HEK293T (cell line): ENCODE measurements at regions of chr4 and their contacts with region 1.

Region 1: GRCh38 chr4:119212234-119212963 is at the start of gene USP53:
- DNase-seq: peak; percentile 98

Region 2: DNA sequence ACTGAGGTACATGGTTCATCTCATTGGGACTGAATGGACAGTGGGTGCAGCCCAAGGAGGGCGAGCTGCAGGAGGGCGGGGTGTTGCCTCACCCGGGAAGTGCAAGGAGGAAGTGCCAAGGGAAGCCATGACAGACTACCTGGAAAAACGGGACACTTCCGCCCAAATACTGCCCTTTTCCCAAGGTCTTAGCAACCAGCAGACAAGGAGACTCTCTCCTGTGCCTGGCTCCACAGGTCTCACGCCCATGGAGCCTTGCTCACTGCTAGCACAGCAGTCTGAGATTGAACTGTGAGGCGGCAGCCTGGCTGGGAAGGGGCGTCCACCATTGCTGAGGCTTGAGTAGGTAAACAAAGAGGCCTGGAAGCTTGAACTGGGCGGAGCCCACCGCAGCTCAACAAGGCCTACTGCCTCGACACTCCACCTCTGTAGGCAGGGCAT is 14.6 kb before region 1 on chr4:
- CTCF ChIA-PET with region 1: no interaction called
- POLR2A ChIA-PET with region 1: no interaction called
- DNase-seq: no peak

Region 3: GRCh38 chr4:119227690-119228089 is 15.3 kb after region 1 on chr4:
- CTCF ChIA-PET with region 1: no interaction called
- POLR2A ChIA-PET with region 1: interaction called, 14 read pairs
- DNase-seq: no peak

Region 4: GRCh38 chr4:119284876-119285780 is 72.7 kb after region 1 on chr4:
- CTCF ChIA-PET with region 1: interaction called, 3 read pairs
- POLR2A ChIA-PET with region 1: interaction called, 10 read pairs
- DNase-seq: no peak